HEK293 (cell line): ENCODE measurements at regions of chr19 and their contacts with region 1.

Region 1: GRCh38 chr19:35468637-35469036 is 20.6 kb downstream of the FFAR2 start:
- H3K4me3 ChIP-seq: no peak overlapping the region
- H3K27ac ChIP-seq: no peak overlapping the region
- H3K4me1 ChIP-seq: no peaks in the 10 kb centered on the region
- CTCF ChIP-seq: peak; percentile 92

Region 2: DNA sequence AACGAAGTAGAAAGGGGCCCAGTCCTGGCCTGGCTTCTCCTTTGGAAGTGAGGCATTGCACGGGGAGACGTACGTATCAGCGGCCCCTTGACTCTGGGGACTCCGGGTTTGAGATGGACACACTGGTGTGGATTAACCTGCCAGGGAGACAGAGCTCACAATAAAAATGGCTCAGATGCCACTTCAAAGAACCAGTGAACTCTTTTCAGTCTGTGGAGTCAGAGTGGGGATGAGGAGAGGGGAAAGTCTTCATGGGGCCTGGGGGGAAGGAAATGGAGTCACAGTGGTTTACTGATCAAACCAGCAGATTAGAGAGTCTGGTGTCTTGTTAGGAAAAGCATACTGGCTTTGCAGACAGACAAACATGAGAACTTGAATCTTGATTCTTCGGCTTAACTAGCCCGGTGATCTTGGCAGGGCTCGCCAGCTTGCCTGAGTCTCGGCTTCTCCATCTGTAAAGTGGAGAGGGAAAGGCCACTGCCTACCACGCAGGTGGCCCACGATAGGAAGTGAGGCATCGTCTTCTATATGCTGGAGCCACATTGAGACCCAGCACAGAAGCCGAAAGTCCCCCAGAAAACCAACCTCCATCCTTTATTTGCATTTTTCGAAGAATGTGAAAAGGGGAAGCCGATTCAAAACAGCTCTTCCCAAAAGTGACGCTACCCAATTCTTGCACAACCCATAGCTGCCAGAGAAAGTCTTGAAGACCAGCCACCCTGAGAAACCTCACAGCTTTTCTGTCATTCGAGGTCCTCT is 121.3 kb before region 1 on chr19 and contains the start of gene FFAR1:
- CTCF ChIA-PET with region 1: interaction called, 157 read pairs
- POLR2A ChIA-PET with region 1: no interaction called
- H3K4me3 ChIP-seq: no peak within 1 kb of the TSS
- H3K27ac ChIP-seq: no peak within 1 kb of the TSS
- H3K4me1 ChIP-seq: no peaks in the 10 kb centered on the region
- CTCF ChIP-seq: no peak

Region 3: GRCh38 chr19:35449053-35449687 is 19.5 kb before region 1 on chr19:
- CTCF ChIA-PET with region 1: interaction called, 19 read pairs
- POLR2A ChIA-PET with region 1: no interaction called
- H3K4me3 ChIP-seq: no peak overlapping the region
- H3K27ac ChIP-seq: no peak overlapping the region
- H3K4me1 ChIP-seq: peaks cover 2% of the 10 kb centered on the region; the same call in 1 of the 2 replicates
- CTCF ChIP-seq: no peak